Posterior vena cava (tissue), 2 donors: ENCODE measurements at regions of chr4 and their contacts with region 1.

Region 1: GRCh38 chr4:3168029-3168428 is 80.9 kb upstream of the MSANTD1 start:
- DNase-seq: no peak

Region 2: GRCh38 chr4:3148926-3149325 is 19.1 kb before region 1 on chr4:
- intact Hi-C with region 1: loop called in 1 of 2 experiments (anchors 1 kb)
- DNase-seq: no peak